HEK293 (cell line): ENCODE measurements at regions of chrX and their contacts with region 1.

Region 1: GRCh38 chrX:53269536-53270107 is 11.8 kb downstream of the IQSEC2 start:
- H3K4me3 ChIP-seq: no peak overlapping the region
- H3K27ac ChIP-seq: no peak overlapping the region
- H3K4me1 ChIP-seq: peaks cover 2% of the 10 kb centered on the region; the same call in 1 of the 2 replicates
- CTCF ChIP-seq: no peak

Region 2: GRCh38 chrX:53128097-53128749 is 141.4 kb before region 1 on chrX:
- CTCF ChIA-PET with region 1: no interaction called
- POLR2A ChIA-PET with region 1: no interaction called
- H3K4me3 ChIP-seq: no peak overlapping the region
- H3K27ac ChIP-seq: no peak overlapping the region
- H3K4me1 ChIP-seq: no peaks in the 10 kb centered on the region
- CTCF ChIP-seq: no peak

Region 3: DNA sequence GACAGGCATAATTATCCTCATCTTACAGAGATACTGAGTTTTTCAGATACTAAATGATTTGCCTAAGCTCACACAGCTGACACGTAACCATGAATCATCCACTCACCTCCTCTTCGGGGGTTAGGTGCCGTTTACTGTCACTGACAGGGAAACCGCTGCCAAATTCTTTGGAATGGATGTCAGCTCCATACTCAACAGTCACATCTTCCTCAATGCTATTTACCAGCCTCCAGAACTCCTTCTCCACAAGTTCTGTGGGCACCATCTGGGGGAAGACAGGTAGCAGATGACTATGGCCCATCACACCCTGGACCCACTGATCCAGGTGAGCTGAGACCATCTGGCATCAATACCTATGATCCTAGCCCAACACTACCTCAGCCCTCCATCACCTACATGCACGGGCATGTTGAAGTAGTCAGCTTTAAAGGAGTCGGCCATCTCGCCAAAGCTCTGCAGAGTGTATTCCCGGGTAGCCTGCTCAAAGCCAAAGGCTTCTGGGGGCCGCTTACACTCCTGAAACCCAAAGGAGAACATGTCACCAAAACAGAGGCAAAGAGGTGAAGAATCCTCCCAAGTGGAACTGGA is 58.1 kb before region 1 on chrX:
- CTCF ChIA-PET with region 1: no interaction called
- POLR2A ChIA-PET with region 1: interaction called, 10 read pairs
- H3K4me3 ChIP-seq: no peak overlapping the region
- H3K27ac ChIP-seq: no peak overlapping the region
- H3K4me1 ChIP-seq: no peaks in the 10 kb centered on the region
- CTCF ChIP-seq: no peak